ENCODE measurements at regions of chr7 and their contacts with region 1.

Region 1: GRCh38 chr7:140479062-140479738 is at the start of gene MKRN1:
- DNase-seq: peak; percentile 94
- H3K4me3 Mint-ChIP-seq: peak within 1 kb of the TSS; percentile 85
- H3K27ac Mint-ChIP-seq: peak within 1 kb of the TSS; percentile 90
- H3K4me1 Mint-ChIP-seq: peaks cover 5% of the 10 kb centered on the region
- H3K27me3 Mint-ChIP-seq: no peaks in the 10 kb centered on the region
- CTCF ChIP-seq: no peak
- total RNA-seq, gene MKRN1: 59.8 and 65.5 TPM in 2 replicates

Region 2: GRCh38 chr7:140397784-140398750 is 81.1 kb before region 1 on chr7 and contains the start of gene SLC37A3:
- CTCF ChIA-PET with region 1: interaction called, 4 read pairs
- POLR2A ChIA-PET with region 1: interaction called, 4 read pairs
- intact Hi-C with region 1: loop called (anchors 5 kb)
- DNase-seq: peak; percentile 85
- H3K4me3 Mint-ChIP-seq: peak within 1 kb of the TSS; percentile 99
- H3K27ac Mint-ChIP-seq: peak within 1 kb of the TSS; percentile 99
- H3K4me1 Mint-ChIP-seq: peaks cover 22% of the 10 kb centered on the region
- H3K27me3 Mint-ChIP-seq: no peaks in the 10 kb centered on the region
- CTCF ChIP-seq: no peak
- total RNA-seq, gene SLC37A3: 25.5 and 36.1 TPM in 2 replicates

Region 3: GRCh38 chr7:140463111-140463510 is 16.1 kb before region 1 on chr7:
- CTCF ChIA-PET with region 1: interaction called, 34 read pairs
- POLR2A ChIA-PET with region 1: interaction called, 5 read pairs
- intact Hi-C with region 1: no loop called
- DNase-seq: no peak
- H3K4me3 Mint-ChIP-seq: no peak overlapping the region
- H3K27ac Mint-ChIP-seq: no peak overlapping the region
- H3K4me1 Mint-ChIP-seq: no peaks in the 10 kb centered on the region
- H3K27me3 Mint-ChIP-seq: no peaks in the 10 kb centered on the region
- CTCF ChIP-seq: no peak

Region 4: DNA sequence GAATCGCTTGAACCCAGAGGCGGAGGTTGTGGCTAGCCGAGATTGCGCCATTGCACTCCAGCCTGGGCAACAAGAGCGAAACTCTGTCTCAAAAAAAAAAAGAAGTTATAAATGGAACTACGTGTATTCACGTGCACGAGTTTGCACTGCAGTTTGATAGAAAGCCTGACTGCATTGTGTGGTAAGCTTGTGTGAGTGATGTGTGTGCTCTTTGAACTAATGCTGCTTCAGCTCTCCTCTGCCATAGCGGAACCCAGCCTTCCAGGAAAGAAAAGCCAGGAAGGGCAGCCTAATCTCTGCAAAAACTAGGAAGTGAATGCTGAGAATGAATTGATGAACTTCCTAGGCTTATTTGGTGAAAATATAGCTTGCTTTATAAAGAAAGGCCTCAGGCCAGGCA is 15.7 kb after region 1 on chr7:
- CTCF ChIA-PET with region 1: interaction called, 197 read pairs
- POLR2A ChIA-PET with region 1: interaction called, 9 read pairs
- intact Hi-C with region 1: loop called (anchors 1 kb)
- DNase-seq: no peak
- H3K4me3 Mint-ChIP-seq: no peak overlapping the region
- H3K27ac Mint-ChIP-seq: no peak overlapping the region
- H3K4me1 Mint-ChIP-seq: no peaks in the 10 kb centered on the region
- H3K27me3 Mint-ChIP-seq: no peaks in the 10 kb centered on the region
- CTCF ChIP-seq: no peak

Region 5: DNA sequence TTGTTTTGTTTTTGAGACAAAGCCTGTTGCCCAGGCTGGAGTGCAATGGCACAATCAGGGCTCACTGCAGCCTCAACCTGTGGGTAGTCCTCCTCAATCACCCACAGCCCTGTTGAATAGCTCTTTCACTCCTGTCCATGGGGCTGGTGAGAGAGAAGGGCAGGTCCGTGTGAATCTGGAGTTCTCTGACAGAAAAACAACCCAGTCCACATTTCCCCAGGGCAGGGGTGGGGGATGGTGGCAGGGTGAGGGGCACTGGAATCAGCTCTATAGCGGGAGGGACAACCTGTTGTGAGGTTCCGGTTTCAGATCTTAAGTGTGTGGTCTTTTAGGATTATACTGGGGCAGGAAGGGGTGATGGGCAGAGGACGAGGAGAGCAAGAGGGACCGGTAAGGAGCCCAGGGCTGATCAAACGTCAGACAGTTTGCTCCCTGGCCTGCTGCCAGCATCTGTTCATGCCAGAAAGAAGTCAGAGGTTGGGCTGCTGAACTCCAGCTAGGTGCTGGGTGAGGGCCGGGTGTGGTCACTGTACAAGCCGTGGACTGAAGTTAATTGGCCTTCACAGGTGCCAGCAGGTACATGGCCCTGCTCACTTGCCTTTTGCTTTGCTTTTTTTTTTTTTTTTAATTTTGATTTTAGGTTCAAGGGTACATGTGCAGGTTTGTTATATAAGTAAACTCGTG is 33.3 kb after region 1 on chr7:
- CTCF ChIA-PET with region 1: interaction called, 14 read pairs
- POLR2A ChIA-PET with region 1: interaction called, 5 read pairs
- intact Hi-C with region 1: no loop called
- DNase-seq: peak; percentile 82
- H3K4me3 Mint-ChIP-seq: no peak overlapping the region
- H3K27ac Mint-ChIP-seq: no peak overlapping the region
- H3K4me1 Mint-ChIP-seq: peaks cover 6% of the 10 kb centered on the region
- H3K27me3 Mint-ChIP-seq: no peaks in the 10 kb centered on the region
- CTCF ChIP-seq: no peak

Region 6: DNA sequence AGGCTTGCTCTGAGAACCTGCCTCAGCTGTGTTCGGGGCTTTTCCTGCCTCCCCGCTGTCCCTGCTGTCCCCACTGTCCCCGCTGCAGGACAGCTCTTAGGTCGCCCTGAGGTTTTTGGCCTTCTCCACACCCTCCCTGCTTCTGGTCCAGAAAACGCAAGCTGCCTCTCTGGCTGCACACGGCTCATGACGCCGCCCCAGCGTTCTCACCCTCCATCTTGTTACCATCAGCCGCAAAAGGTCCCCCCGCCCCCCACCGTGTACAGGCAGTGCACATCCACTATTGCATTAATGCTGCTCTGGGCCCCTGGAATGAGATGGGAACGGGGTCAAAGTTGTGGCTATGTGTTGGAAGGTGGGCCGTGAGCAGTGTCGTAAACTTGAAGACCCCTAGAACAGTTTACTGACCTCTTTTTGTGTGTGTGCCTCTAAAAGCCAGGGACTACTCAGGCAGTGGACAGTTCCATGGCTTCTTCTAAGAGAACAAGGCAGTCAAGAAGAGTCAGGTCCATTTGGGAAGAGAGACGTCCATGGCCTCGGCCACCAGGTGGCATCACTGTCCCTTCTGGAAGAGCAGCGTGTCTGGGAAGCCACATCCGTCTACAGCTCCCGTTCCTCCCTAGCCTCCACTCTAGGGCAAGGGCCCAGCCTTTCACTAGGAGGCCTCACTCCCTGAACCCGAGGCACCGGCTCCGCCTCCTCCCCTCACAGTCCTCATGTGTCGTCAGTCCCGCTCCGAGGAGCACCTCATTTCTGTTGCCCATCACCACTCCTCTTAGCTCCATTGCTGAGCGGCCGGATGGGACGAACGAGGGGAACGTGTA is 38.6 kb after region 1 on chr7:
- CTCF ChIA-PET with region 1: interaction called, 14 read pairs
- POLR2A ChIA-PET with region 1: interaction called, 5 read pairs
- intact Hi-C with region 1: no loop called
- DNase-seq: peak; percentile 91
- H3K4me3 Mint-ChIP-seq: no peak overlapping the region
- H3K27ac Mint-ChIP-seq: no peak overlapping the region
- H3K4me1 Mint-ChIP-seq: peaks cover 6% of the 10 kb centered on the region
- H3K27me3 Mint-ChIP-seq: no peaks in the 10 kb centered on the region
- CTCF ChIP-seq: peak; percentile 81